Activated CD8-positive, alpha-beta T cell treated with anti-CD3 and anti-CD28 coated beads, Interleukin-2, amount 10 ng/mL, durations not matched to agents 7 days and 5 days (primary cell): ENCODE measurements at regions of chr1 and their contacts with region 1.

Region 1: GRCh38 chr1:37486680-37487618 is 12.6 kb downstream of the ZC3H12A start:
- DNase-seq: peak; percentile 82
- ATAC-seq: peak; percentile 63
- H3K4me3 Mint-ChIP-seq: no peak overlapping the region
- H3K27ac Mint-ChIP-seq: peak overlapping the region; percentile 84
- H3K4me1 Mint-ChIP-seq: peaks cover 17% of the 10 kb centered on the region
- H3K27me3 Mint-ChIP-seq: no peaks in the 10 kb centered on the region

Region 2: GRCh38 chr1:37458528-37458927 is 28.4 kb before region 1 on chr1:
- CTCF ChIA-PET with region 1: interaction called, 269 read pairs
- POLR2A ChIA-PET with region 1: interaction called, 3 read pairs
- DNase-seq: no peak
- ATAC-seq: no peak
- H3K4me3 Mint-ChIP-seq: no peak overlapping the region
- H3K27ac Mint-ChIP-seq: no peak overlapping the region
- H3K4me1 Mint-ChIP-seq: peaks cover 12% of the 10 kb centered on the region
- H3K27me3 Mint-ChIP-seq: no peaks in the 10 kb centered on the region

Region 3: DNA sequence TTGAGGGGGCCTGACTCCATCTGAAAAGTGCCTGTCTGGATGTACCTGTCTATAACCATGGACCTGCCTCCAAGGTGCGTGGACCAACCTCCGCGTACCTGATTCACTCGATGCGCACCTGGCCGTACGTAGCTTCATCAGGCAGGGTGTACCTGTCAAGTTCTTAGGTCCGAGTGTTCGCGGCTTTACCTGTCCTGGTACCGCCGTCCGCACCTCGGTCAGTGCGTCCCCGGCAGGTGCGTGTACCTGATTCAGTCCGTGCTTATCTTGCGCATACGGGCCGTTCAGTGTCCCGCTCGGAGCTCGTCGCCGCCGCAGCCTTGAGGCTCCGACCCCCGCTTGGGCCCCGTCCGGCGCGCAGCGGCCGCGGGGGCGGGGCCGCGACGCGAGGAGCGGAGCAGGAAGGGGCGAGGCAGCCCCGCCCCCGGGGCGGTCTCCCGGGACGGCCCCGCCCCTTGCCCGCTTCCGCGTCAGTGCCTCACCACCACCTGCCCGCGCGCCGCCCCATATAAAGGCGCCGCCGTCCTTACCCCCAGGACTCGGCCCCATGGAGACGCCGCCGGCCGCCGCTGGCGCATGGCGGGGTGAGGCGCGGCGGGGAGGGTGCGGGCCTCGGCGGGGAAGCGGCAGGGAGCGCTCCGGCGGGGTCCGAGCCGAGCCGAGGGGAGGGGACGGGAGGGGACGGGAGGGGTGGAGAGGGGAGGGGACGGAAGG is 12.7 kb before region 1 on chr1 and contains the start of gene ZC3H12A:
- CTCF ChIA-PET with region 1: interaction called, 165 read pairs
- POLR2A ChIA-PET with region 1: interaction called, 49 read pairs
- DNase-seq: peak; percentile 92
- ATAC-seq: peak; percentile 66
- H3K4me3 Mint-ChIP-seq: peak within 1 kb of the TSS; percentile 90
- H3K27ac Mint-ChIP-seq: peak within 1 kb of the TSS; percentile 98
- H3K4me1 Mint-ChIP-seq: peaks cover 62% of the 10 kb centered on the region
- H3K27me3 Mint-ChIP-seq: no peaks in the 10 kb centered on the region
- total RNA-seq, gene ZC3H12A: 15.1 to 17.8 TPM

Region 4: DNA sequence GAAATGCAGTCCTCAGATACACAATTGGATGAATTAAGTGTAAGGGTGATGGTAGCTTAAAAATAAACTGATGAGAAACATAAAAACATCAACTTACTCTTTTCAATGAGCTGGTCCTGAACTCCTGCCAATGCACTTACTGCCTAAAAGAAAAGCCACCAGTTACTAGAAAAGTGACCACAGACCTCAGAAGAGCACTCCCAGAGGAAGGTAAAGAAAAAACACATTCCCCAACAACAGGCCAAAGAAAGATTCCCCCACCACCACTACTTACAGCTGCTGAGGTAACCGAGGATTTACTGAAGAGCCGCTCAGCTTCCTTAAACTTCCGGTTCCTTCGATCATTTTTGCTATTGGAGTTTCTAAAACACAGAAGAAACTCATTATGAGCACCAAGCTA is 22.2 kb after region 1 on chr1:
- CTCF ChIA-PET with region 1: interaction called, 111 read pairs
- POLR2A ChIA-PET with region 1: interaction called, 3 read pairs
- DNase-seq: no peak
- ATAC-seq: no peak
- H3K4me3 Mint-ChIP-seq: no peak overlapping the region
- H3K27ac Mint-ChIP-seq: no peak overlapping the region
- H3K4me1 Mint-ChIP-seq: peaks cover 34% of the 10 kb centered on the region
- H3K27me3 Mint-ChIP-seq: no peaks in the 10 kb centered on the region

Region 5: DNA sequence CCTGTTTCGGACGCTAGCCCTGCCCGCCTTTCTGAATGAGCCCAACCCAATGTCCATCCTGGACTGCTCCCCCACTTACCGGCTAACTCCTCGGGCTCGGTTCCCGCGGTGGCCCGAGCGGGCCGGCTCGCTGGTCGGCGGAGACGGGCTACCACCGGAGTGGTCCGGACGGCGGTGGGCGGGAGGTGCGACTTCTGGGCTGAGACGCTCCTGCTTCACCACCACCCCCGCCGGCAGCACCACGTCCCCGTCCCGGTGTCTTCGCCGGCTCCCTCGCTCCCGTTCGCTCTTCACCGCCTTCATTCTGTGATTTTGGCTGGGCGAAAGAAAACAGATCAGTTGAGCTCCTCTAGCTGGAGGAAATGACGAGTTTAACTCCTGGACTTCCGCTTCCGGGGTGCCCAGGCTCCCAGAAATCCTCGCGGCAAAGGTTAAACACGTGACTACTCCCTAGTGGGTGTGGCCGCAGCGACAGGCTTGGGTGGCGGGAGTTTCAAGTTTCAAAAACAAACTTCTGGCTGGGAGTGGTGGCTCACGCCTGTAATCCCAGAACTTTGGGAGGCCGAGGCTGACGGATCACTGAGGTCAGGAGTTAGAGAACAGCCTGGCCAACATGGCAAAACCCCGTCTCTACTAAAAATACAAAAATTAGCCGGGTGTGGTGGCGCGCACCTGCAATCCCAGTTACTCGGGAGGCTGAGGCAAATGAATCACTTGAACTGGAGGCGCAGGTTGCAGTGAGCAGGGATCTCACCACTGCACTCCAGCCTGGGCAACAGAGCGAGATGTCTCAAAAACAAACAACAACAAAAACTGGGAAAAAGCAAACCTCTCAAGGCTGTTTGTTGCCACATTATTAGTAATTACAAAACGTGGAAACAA is 67.2 kb after region 1 on chr1 and contains the start of gene SNIP1:
- CTCF ChIA-PET with region 1: interaction called, 13 read pairs
- POLR2A ChIA-PET with region 1: no interaction called
- DNase-seq: peak; percentile 95
- ATAC-seq: peak; percentile 87
- H3K4me3 Mint-ChIP-seq: peak within 1 kb of the TSS; percentile 85
- H3K27ac Mint-ChIP-seq: peak within 1 kb of the TSS; percentile 94
- H3K4me1 Mint-ChIP-seq: peaks cover 54% of the 10 kb centered on the region
- H3K27me3 Mint-ChIP-seq: peaks cover 2% of the 10 kb centered on the region
- total RNA-seq, gene SNIP1: 24.1 to 27.7 TPM

Region 6: GRCh38 chr1:37682334-37682987 is 195.5 kb after region 1 on chr1:
- CTCF ChIA-PET with region 1: interaction called, 20 read pairs
- POLR2A ChIA-PET with region 1: no interaction called
- DNase-seq: peak; percentile 86
- ATAC-seq: peak; percentile 61
- H3K4me3 Mint-ChIP-seq: no peak overlapping the region
- H3K27ac Mint-ChIP-seq: no peak overlapping the region
- H3K4me1 Mint-ChIP-seq: peaks cover 3% of the 10 kb centered on the region
- H3K27me3 Mint-ChIP-seq: peaks cover 18% of the 10 kb centered on the region